ENCODE measurements at regions of chr11 and their contacts with region 1.

Region 1: GRCh38 chr11:73177778-73178577 is 35.9 kb upstream of the FCHSD2 start:
- DNase-seq: peak; percentile 68 to 76 (median 70)
- ATAC-seq: peak; percentile 89
- H3K4me3 ChIP-seq: no peak overlapping the region
- H3K27ac ChIP-seq: no peak overlapping the region
- H3K4me1 ChIP-seq: peaks cover 5 to 7% of the 10 kb centered on the region in 2 experiments; a peak in 3 of 5 replicates
- H3K27me3 ChIP-seq: no peaks in the 10 kb centered on the region
- CTCF ChIP-seq: peak; percentile 73 to 83 (median 81)
- EP300 ChIP-seq: no peak
- POLR2A ChIP-seq: no peak
- RAD21 ChIP-seq: peak; percentile 94 to 96

Region 2: GRCh38 chr11:72924568-72925190 is 253.3 kb before region 1 on chr11:
- CTCF ChIA-PET with region 1: interaction called, 16 read pairs
- POLR2A ChIA-PET with region 1: no interaction called
- in situ Hi-C with region 1: no loop called
- intact Hi-C with region 1: loop called (anchors 1 kb)
- DNase-seq: peak in 1 of 4 experiments; percentile 13
- ATAC-seq: 0 out of 3 replicates have a peak, but pooled peaks have one; percentile 47
- H3K4me3 ChIP-seq: no peak overlapping the region
- H3K27ac ChIP-seq: no peak overlapping the region
- H3K4me1 ChIP-seq: no peaks in the 10 kb centered on the region; a peak in 1 of 5 replicates
- H3K27me3 ChIP-seq: no peaks in the 10 kb centered on the region
- CTCF ChIP-seq: peak; percentile 31 to 64 (median 32); a peak in 4 of 6 replicates
- EP300 ChIP-seq: no peak
- POLR2A ChIP-seq: no peak
- RAD21 ChIP-seq: peak; percentile 19 to 68; a peak in 2 of 4 replicates

Measured in K562 (cell line).